Head of caudate nucleus (tissue), 42 donors: ENCODE measurements at regions of chr5 and their contacts with region 1.

Region 1: DNA sequence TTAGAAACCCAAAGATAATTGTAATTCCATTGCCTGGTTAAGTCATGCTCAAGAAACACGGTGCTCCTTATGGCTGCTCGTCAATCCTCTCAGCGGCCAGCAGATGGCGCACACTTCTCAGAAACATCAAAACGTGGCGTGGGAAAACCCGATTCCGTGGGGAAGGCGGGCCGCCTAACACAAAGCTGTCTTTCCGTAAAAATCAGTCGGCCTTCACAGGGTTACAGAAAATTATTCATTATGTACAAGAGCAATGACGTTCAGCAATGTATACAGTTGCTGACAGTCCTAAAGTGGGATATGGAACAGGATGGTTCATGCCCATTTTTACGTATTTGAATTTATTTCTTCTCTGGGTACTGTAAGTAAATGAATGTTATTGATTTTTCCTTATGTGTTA is 83.5 kb downstream of the PDE4D start:
- DNase-seq: peak; percentile 70 to 93 (median 85)

Region 2: GRCh38 chr5:59380350-59380951 is 429.6 kb before region 1 on chr5:
- intact Hi-C with region 1: no loop called
- DNase-seq: no peak

Region 3: DNA sequence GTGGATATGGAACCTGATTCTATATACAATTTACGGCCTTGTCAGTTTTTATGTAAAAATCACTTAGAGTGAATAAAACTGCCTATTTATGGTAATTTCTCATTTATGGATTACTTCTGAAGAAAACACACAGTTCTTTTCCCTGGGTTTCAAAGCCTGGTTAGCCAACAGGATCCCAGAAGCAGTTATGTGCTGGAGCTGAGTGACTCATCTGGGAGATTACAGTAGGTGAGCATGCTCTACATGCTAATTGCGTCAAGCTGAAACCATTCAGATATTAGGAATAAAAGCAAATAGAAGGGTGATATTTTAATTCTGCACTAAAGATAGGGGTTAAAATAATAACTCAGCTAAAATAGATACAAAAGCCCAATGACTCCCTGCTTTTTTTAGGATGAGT is 35.7 kb after region 1 on chr5:
- intact Hi-C with region 1: no loop called
- DNase-seq: peak in 8 of 42 donors; percentile 5 to 56 (median 21)

Region 4: GRCh38 chr5:60092671-60093422 is 282.8 kb after region 1 on chr5:
- intact Hi-C with region 1: no loop called
- DNase-seq: no peak

Region 5: DNA sequence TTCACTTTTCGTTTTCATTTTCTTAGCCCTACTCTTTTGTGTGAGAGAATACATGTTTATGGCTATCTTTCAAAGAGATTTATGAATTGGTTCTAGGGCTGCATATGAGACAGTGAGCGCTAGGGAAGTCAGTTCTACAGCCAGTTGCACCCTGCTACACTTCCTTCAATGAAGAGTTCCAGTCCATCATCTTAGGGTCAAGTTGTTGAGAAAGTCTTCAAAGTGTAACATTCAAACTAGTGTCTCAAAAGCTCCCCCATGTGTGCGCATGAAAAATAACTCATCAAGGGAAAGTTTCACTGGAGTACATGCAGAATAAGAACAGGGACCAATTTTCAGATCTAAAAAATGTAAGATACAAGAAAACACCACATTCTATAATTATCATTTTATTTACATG is 572.7 kb after region 1 on chr5:
- intact Hi-C with region 1: loop called (anchors 10 kb)
- DNase-seq: peak in 21 of 42 donors; percentile 1 to 67 (median 26)

Region 6: GRCh38 chr5:60668686-60669304 is 858.8 kb after region 1 on chr5:
- intact Hi-C with region 1: loop called (anchors 10 kb)
- DNase-seq: no peak